AG04450 (cell line): ENCODE measurements at regions of chr10 and their contacts with region 1.

Region 1: GRCh38 chr10:69080226-69080625 is 7.7 kb upstream of the SRGN start:
- DNase-seq: no peak
- H3K4me3 ChIP-seq: no peak overlapping the region
- H3K27ac ChIP-seq: no peak overlapping the region
- H3K27me3 ChIP-seq: no peaks in the 10 kb centered on the region
- CTCF ChIP-seq: no peak

Region 2: GRCh38 chr10:68668231-68668630 is 412.0 kb before region 1 on chr10:
- CTCF ChIA-PET with region 1: no interaction called
- POLR2A ChIA-PET with region 1: interaction called, 10 read pairs
- DNase-seq: no peak
- H3K4me3 ChIP-seq: no peak overlapping the region
- H3K27ac ChIP-seq: no peak overlapping the region
- H3K27me3 ChIP-seq: no peaks in the 10 kb centered on the region
- CTCF ChIP-seq: no peak

Region 3: GRCh38 chr10:69558559-69558958 is 478.3 kb after region 1 on chr10:
- CTCF ChIA-PET with region 1: no interaction called
- POLR2A ChIA-PET with region 1: no interaction called
- DNase-seq: no peak
- H3K4me3 ChIP-seq: no peak overlapping the region
- H3K27ac ChIP-seq: no peak overlapping the region
- H3K27me3 ChIP-seq: peaks cover 21% of the 10 kb centered on the region
- CTCF ChIP-seq: no peak